Activated CD8-positive, alpha-beta T cell treated with anti-CD3 and anti-CD28 coated beads, Interleukin-2, amount 10 ng/mL, durations not matched to agents 7 days and 5 days (primary cell): ENCODE measurements at regions of chr17 and their contacts with region 1.

Region 1: GRCh38 chr17:42183741-42184711 is 1.2 kb downstream of the HCRT start:
- DNase-seq: peak; percentile 80
- ATAC-seq: peak; percentile 71
- H3K4me3 Mint-ChIP-seq: peak overlapping the region; percentile 82
- H3K27ac Mint-ChIP-seq: peak overlapping the region; percentile 80
- H3K4me1 Mint-ChIP-seq: peaks cover 55% of the 10 kb centered on the region
- H3K27me3 Mint-ChIP-seq: peaks cover 27% of the 10 kb centered on the region

Region 2: DNA sequence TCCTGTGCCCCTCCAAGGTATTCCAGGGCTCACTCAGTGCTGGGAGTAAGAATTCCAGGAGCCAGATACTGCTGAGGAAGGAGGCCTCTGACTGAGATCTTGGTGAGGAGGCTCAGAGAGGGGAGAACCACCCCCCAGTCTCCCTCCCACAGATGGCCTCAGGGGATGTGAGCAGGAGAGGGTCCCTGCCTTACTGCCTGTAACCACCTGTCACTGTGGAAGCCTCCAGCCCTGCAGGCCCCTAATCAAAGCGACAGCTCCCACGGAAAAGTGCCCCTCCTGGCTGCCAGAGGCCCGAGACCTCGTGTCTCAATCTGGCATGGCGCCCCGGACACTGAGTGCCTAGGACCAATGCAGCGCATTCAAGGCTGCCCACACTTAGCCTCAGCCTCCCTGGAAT is 126.0 kb before region 1 on chr17:
- CTCF ChIA-PET with region 1: no interaction called
- POLR2A ChIA-PET with region 1: no interaction called
- DNase-seq: no peak
- ATAC-seq: no peak
- H3K4me3 Mint-ChIP-seq: no peak overlapping the region
- H3K27ac Mint-ChIP-seq: no peak overlapping the region
- H3K4me1 Mint-ChIP-seq: peaks cover 12% of the 10 kb centered on the region
- H3K27me3 Mint-ChIP-seq: peaks cover 5% of the 10 kb centered on the region

Region 3: GRCh38 chr17:42120770-42121769 is 63.0 kb before region 1 on chr17 and contains the start of gene KAT2A:
- CTCF ChIA-PET with region 1: interaction called, 16 read pairs
- POLR2A ChIA-PET with region 1: interaction called, 5 read pairs
- DNase-seq: peak; percentile 83
- ATAC-seq: peak; percentile 92
- H3K4me3 Mint-ChIP-seq: peak within 1 kb of the TSS; percentile 73
- H3K27ac Mint-ChIP-seq: peak within 1 kb of the TSS; percentile 54
- H3K4me1 Mint-ChIP-seq: peaks cover 33% of the 10 kb centered on the region
- H3K27me3 Mint-ChIP-seq: no peaks in the 10 kb centered on the region
- total RNA-seq, gene KAT2A: 45.2 to 46.8 TPM

Region 4: DNA sequence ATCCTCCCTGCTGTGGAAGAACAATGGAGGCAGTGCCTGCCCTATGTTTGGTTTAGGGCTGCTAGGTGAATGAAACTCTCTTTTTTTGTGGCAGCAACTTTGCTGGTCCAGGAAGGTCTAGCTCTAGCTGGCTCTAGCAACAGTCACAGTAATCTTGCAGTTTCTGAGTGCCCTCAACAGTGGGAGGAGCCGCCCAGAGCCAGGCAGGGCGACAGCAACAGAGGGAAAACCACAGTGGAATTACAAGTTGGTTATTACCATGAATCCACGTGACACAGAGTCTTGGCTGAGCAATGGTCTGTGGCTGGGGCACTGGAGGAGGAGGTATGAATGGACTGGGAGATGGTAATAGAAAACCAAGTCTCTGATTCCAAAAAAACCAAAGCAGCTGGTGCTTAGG is 51.1 kb before region 1 on chr17:
- CTCF ChIA-PET with region 1: interaction called, 14 read pairs
- POLR2A ChIA-PET with region 1: interaction called, 3 read pairs
- DNase-seq: no peak
- ATAC-seq: peak; percentile 57
- H3K4me3 Mint-ChIP-seq: no peak overlapping the region
- H3K27ac Mint-ChIP-seq: peak overlapping the region; percentile 60
- H3K4me1 Mint-ChIP-seq: peaks cover 54% of the 10 kb centered on the region
- H3K27me3 Mint-ChIP-seq: no peaks in the 10 kb centered on the region

Region 5: GRCh38 chr17:42163113-42163512 is 20.9 kb before region 1 on chr17:
- CTCF ChIA-PET with region 1: interaction called, 22 read pairs
- POLR2A ChIA-PET with region 1: interaction called, 4 read pairs
- DNase-seq: peak; percentile 63
- ATAC-seq: peak; percentile 42
- H3K4me3 Mint-ChIP-seq: no peak overlapping the region
- H3K27ac Mint-ChIP-seq: no peak overlapping the region
- H3K4me1 Mint-ChIP-seq: peaks cover 3% of the 10 kb centered on the region
- H3K27me3 Mint-ChIP-seq: no peaks in the 10 kb centered on the region

Region 6: DNA sequence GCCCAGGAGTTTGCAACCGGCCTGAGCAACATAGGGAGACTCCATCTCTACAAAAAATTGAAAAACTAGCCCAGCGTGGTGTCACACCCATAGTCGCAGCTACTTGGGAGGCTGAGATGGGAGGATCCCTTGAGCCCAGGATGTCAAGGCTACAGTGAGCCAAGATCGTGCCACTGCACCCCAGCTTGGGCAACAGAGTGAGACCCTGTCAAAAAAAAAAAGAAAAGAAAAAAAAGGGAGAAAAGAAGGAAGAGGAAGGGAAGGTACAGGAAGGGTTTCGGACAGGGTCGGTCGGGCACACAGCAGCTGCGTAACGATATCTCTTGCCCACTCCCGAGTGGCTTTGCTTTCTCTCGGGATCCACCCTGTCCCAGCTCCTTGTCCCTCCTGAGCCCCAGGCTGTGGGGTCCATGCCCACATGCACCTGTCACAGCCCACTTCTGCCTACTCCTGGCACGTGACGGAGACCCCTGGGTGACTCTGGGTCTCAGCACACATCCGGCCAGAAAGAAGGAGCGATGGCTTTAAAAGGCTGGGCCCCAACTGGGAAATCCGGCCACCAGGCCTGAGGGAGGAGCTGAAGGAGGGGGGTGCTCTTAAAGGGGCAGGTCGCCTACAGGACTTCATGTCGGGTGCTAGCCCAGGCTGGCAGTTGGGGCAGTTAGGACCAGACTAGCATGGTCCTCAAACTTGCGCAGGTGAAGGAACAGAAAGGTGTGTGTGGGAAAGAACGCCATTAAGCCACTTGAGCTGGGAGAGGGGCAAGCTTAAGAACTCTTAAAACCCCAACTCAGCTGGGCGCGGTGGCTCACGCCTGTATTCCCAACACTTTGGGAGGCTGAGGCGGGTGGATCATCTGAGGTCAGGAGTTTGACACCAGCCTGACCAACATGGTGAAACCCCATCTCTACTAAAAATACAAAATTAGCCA is 10.2 kb after region 1 on chr17 and contains the start of gene GHDC:
- CTCF ChIA-PET with region 1: interaction called, 72 read pairs
- POLR2A ChIA-PET with region 1: interaction called, 6 read pairs
- DNase-seq: peak; percentile 90
- ATAC-seq: peak; percentile 98
- H3K4me3 Mint-ChIP-seq: peak within 1 kb of the TSS; percentile 92
- H3K27ac Mint-ChIP-seq: peak within 1 kb of the TSS; percentile 96
- H3K4me1 Mint-ChIP-seq: peaks cover 24% of the 10 kb centered on the region
- H3K27me3 Mint-ChIP-seq: no peaks in the 10 kb centered on the region
- total RNA-seq, gene GHDC: 16.6 to 17.2 TPM